ENCODE measurements at regions of chr11 and their contacts with region 1.

Region 1: GRCh38 chr11:67630228-67630942 is 648 bp upstream of the NUDT8 start:
- DNase-seq: peak; percentile 99
- H3K4me3 ChIP-seq: peak overlapping the region; percentile 77
- H3K27ac ChIP-seq: peak overlapping the region; percentile 52
- H3K4me1 ChIP-seq: peaks cover 23% of the 10 kb centered on the region
- CTCF ChIP-seq: peak; percentile 75

Region 2: DNA sequence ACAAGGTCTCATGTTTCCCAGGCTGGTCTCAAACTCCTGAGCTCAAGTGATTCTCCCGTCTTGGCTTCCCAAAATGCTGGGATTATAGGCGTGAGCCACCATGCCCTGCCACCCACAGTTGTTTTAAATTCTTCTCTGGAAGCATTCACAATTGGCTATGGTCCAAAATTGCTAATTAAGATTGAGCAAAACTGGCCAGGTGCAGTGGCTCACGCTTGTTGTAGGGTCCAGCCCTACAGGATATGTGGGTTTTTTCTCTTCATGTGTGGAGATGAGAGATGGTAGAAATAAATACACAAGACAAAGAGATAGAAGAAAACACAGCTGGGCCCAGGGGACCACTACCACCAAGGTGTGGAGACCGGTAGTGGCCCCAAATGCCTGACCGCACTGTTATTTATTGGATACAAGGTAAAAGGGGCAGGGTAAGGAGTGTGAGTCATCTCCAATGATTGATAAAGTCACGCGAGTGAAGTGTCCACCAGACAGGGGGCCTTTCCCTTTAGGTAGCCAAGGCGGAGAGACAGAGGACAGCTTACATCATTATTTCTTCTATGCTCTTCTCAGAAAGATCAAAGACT is 28.4 kb after region 1 on chr11:
- CTCF ChIA-PET with region 1: no interaction called
- POLR2A ChIA-PET with region 1: no interaction called
- intact Hi-C with region 1: loop called (anchors 2 kb)
- DNase-seq: peak; percentile 79
- H3K4me3 ChIP-seq: peak overlapping the region; percentile 29
- H3K27ac ChIP-seq: peak overlapping the region; percentile 89
- H3K4me1 ChIP-seq: peaks cover 26% of the 10 kb centered on the region
- CTCF ChIP-seq: no peak